ENCODE measurements at regions of chr19 and their contacts with region 1.

Region 1: GRCh38 chr19:49869441-49870176 is 2.2 kb upstream of the PNKP start:
- DNase-seq: peak; percentile 100
- ATAC-seq: peak; percentile 87
- H3K4me3 ChIP-seq: peak overlapping the region; percentile 66
- H3K27ac ChIP-seq: peak overlapping the region; percentile 70
- H3K4me1 ChIP-seq: peaks cover 26% of the 10 kb centered on the region
- H3K27me3 ChIP-seq: no peaks in the 10 kb centered on the region
- CTCF ChIP-seq: no peak; a peak in 1 of 6 replicates
- EP300 ChIP-seq: no peak; a peak in 1 of 4 replicates
- POLR2A ChIP-seq: peak; percentile 56
- RAD21 ChIP-seq: no peak

Region 2: GRCh38 chr19:48310227-48310626 is 1559.4 kb before region 1 on chr19:
- CTCF ChIA-PET with region 1: no interaction called
- POLR2A ChIA-PET with region 1: no interaction called
- RAD21 ChIA-PET with region 1: no interaction called
- SMC1A ChIA-PET with region 1: no interaction called
- in situ Hi-C with region 1: no loop called
- intact Hi-C with region 1: no loop called
- DNase-seq: no peak
- ATAC-seq: no peak
- H3K4me3 ChIP-seq: no peak overlapping the region
- H3K27ac ChIP-seq: no peak overlapping the region
- H3K4me1 ChIP-seq: no peaks in the 10 kb centered on the region
- H3K27me3 ChIP-seq: no peaks in the 10 kb centered on the region
- CTCF ChIP-seq: no peak
- EP300 ChIP-seq: no peak
- POLR2A ChIP-seq: no peak
- RAD21 ChIP-seq: no peak

Region 3: GRCh38 chr19:49676690-49677231 is 192.8 kb before region 1 on chr19:
- CTCF ChIA-PET with region 1: interaction called, 3 read pairs
- POLR2A ChIA-PET with region 1: interaction called, 6 read pairs
- RAD21 ChIA-PET with region 1: interaction called, 4 read pairs
- SMC1A ChIA-PET with region 1: interaction called, 3 read pairs
- in situ Hi-C with region 1: no loop called
- intact Hi-C with region 1: loop called (anchors 5 kb)
- DNase-seq: peak; percentile 99
- ATAC-seq: peak; percentile 72
- H3K4me3 ChIP-seq: peak overlapping the region; percentile 100
- H3K27ac ChIP-seq: peak overlapping the region; percentile 99
- H3K4me1 ChIP-seq: peaks cover 36% of the 10 kb centered on the region
- H3K27me3 ChIP-seq: no peaks in the 10 kb centered on the region
- CTCF ChIP-seq: no peak
- EP300 ChIP-seq: no peak
- POLR2A ChIP-seq: no peak
- RAD21 ChIP-seq: no peak

Region 4: DNA sequence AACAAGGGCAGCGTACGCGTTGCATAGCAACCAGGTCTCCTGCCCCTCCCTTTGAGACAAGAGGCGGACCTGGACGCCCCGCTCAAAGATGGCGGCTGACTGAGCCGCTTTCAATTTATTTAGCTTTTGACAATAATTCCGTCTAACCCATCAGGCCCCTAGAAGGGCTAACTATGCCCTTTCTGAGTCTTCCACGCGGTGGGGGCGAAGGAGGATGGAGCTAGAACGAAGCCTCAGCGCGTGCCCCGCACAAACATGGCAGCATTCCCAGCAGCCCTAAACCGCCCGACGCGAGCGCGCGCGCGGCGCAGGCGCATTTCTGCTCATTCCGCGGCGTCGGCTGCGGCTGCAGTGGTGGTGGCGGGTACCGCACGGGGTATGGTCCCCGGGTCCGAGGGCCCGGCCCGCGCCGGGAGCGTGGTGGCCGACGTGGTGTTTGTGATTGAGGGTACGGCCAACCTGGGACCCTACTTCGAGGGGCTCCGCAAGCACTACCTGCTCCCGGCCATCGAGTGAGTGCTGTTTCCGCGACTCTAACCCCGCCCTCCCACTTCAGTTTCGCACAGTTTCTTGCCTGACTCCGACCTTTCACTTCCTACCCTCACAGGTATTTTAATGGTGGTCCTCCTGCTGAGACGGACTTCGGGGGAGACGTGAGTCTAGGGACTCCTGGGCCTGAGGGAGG is 51.5 kb before region 1 on chr19 and contains the start of gene MED25:
- CTCF ChIA-PET with region 1: interaction called, 6 read pairs
- POLR2A ChIA-PET with region 1: interaction called, 10 read pairs
- RAD21 ChIA-PET with region 1: interaction called, 12 read pairs
- SMC1A ChIA-PET with region 1: interaction called, 6 read pairs
- in situ Hi-C with region 1: no loop called
- intact Hi-C with region 1: no loop called
- DNase-seq: peak; percentile 72
- ATAC-seq: peak; percentile 89
- H3K4me3 ChIP-seq: peak within 1 kb of the TSS; percentile 96
- H3K27ac ChIP-seq: peak within 1 kb of the TSS; percentile 97
- H3K4me1 ChIP-seq: peaks cover 5% of the 10 kb centered on the region
- H3K27me3 ChIP-seq: no peaks in the 10 kb centered on the region
- CTCF ChIP-seq: peak in 1 of 3 experiments; percentile 20; a peak in 1 of 6 replicates
- EP300 ChIP-seq: no peak
- POLR2A ChIP-seq: peak; percentile 89
- RAD21 ChIP-seq: no peak
- polyA plus RNA-seq, gene MED25: 3.5 to 5.2 TPM

Region 5: DNA sequence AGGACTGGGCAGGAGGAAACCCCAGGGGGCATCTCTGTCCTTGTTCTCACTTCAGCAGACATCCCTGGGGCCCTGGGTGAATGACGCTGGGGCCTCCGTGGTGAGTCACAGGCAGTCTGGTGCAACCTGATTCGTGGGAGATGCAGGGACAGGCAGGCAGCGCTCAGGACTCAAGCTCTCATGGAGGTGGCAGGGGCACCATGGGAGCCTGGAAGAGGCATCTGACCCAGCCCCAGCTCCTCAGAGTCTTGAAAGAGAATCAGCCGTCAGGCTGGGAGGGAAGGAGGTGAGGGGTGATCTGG is 32.6 kb before region 1 on chr19:
- CTCF ChIA-PET with region 1: no interaction called
- POLR2A ChIA-PET with region 1: no interaction called
- RAD21 ChIA-PET with region 1: no interaction called
- SMC1A ChIA-PET with region 1: no interaction called
- in situ Hi-C with region 1: no loop called
- intact Hi-C with region 1: no loop called
- DNase-seq: no peak
- ATAC-seq: no peak
- H3K4me3 ChIP-seq: no peak overlapping the region
- H3K27ac ChIP-seq: no peak overlapping the region
- H3K4me1 ChIP-seq: no peaks in the 10 kb centered on the region
- H3K27me3 ChIP-seq: no peaks in the 10 kb centered on the region
- CTCF ChIP-seq: no peak
- EP300 ChIP-seq: no peak
- POLR2A ChIP-seq: no peak
- RAD21 ChIP-seq: no peak

Region 6: GRCh38 chr19:49889687-49890348 is 20.2 kb after region 1 on chr19:
- CTCF ChIA-PET with region 1: interaction called, 4 read pairs
- POLR2A ChIA-PET with region 1: interaction called, 16 read pairs
- RAD21 ChIA-PET with region 1: interaction called, 11 read pairs
- SMC1A ChIA-PET with region 1: interaction called, 9 read pairs
- in situ Hi-C with region 1: no loop called
- intact Hi-C with region 1: no loop called
- DNase-seq: no peak
- ATAC-seq: peak; percentile 31
- H3K4me3 ChIP-seq: peak overlapping the region; percentile 53; the same call in 1 of the 2 replicates
- H3K27ac ChIP-seq: peak overlapping the region; percentile 18; the same call in 1 of the 2 replicates
- H3K4me1 ChIP-seq: peaks cover 25% of the 10 kb centered on the region
- H3K27me3 ChIP-seq: no peaks in the 10 kb centered on the region
- CTCF ChIP-seq: peak; percentile 64 to 79 (median 71)
- EP300 ChIP-seq: no peak
- POLR2A ChIP-seq: no peak
- RAD21 ChIP-seq: peak; percentile 40

Region 7: GRCh38 chr19:49911381-49912145 is 42.0 kb after region 1 on chr19:
- CTCF ChIA-PET with region 1: interaction called, 3 read pairs
- POLR2A ChIA-PET with region 1: interaction called, 17 read pairs
- RAD21 ChIA-PET with region 1: interaction called, 5 read pairs
- SMC1A ChIA-PET with region 1: interaction called, 6 read pairs
- in situ Hi-C with region 1: no loop called
- intact Hi-C with region 1: no loop called
- DNase-seq: peak; percentile 83
- ATAC-seq: peak; percentile 86
- H3K4me3 ChIP-seq: peak overlapping the region; percentile 49; the same call in 1 of the 2 replicates
- H3K27ac ChIP-seq: peak overlapping the region; percentile 76
- H3K4me1 ChIP-seq: peaks cover 61% of the 10 kb centered on the region
- H3K27me3 ChIP-seq: no peaks in the 10 kb centered on the region
- CTCF ChIP-seq: no peak
- EP300 ChIP-seq: no peak
- POLR2A ChIP-seq: peak; percentile 68
- RAD21 ChIP-seq: 0 out of 2 replicates have a peak, but pooled peaks have one; percentile 1